Naive thymus-derived CD4-positive, alpha-beta T cell (primary cell): ENCODE measurements at regions of chr2 and their contacts with region 1.

Region 1: GRCh38 chr2:157433394-157433793 is 10.5 kb downstream of the CYTIP start:
- DNase-seq: peak in 2 of 9 donors; percentile 40 to 60
- ATAC-seq: peak; percentile 7
- H3K4me3 ChIP-seq: peak overlapping the region; percentile 60
- H3K4me3 Mint-ChIP-seq: peak overlapping the region; percentile 87 to 100 (median 97)
- H3K27ac ChIP-seq: peak overlapping the region; percentile 89
- H3K27ac Mint-ChIP-seq: peak overlapping the region; percentile 86 to 99 (median 96)
- H3K4me1 ChIP-seq: peaks cover 54 to 62% of the 10 kb centered on the region in 2 donors
- H3K4me1 Mint-ChIP-seq: peaks cover 61 to 89% (median 73%) of the 10 kb centered on the region in 7 donors
- H3K27me3 ChIP-seq: no peaks in the 10 kb centered on the region
- H3K27me3 Mint-ChIP-seq: no peaks in the 10 kb centered on the region

Region 2: DNA sequence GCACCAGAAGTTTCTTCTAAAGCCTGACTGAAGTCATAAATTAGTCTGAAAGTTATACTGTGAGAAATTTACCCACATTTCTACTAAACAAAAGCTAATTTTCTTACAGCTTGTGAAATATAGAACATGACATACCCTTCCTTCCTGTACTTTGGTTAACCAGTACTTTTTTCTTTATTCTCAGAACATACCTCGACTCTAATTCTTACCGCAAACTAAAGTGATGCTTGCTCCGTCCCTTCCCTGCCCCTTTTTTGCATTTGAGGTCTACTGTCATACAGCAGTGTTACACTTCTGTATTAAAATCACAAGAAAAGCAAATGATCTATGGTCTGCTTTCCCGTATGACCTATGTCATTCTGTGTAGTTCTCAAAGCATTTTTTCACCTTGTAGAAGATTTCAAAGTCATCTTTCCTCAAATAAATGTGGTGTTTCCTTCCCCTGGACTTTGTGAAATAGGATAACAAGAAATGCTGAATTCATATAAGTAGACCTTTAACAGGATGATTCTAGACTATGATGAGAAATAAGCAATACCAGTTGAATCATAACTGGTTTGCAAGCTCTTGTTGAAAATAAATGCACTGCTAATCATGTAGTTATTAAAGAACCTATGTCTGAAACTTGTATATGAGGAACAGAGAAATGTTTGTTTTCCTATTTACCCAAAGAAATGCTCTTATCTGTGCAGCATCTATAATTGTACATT is 19.9 kb before region 1 on chr2:
- CTCF ChIA-PET with region 1: interaction called, 34 read pairs
- POLR2A ChIA-PET with region 1: interaction called, 810 read pairs
- intact Hi-C with region 1: loop called (anchors 1 kb)
- DNase-seq: peak in 7 of 9 donors; percentile 71 to 94 (median 88)
- ATAC-seq: peak; percentile 86
- H3K4me3 ChIP-seq: peak overlapping the region; percentile 22
- H3K4me3 Mint-ChIP-seq: peak overlapping the region; percentile 45 to 85 (median 68)
- H3K27ac ChIP-seq: peak overlapping the region; percentile 86
- H3K27ac Mint-ChIP-seq: peak overlapping the region; percentile 92 to 98 (median 95)
- H3K4me1 ChIP-seq: peaks cover 84 to 89% of the 10 kb centered on the region in 2 donors
- H3K4me1 Mint-ChIP-seq: peaks cover 58 to 97% (median 93%) of the 10 kb centered on the region in 7 donors
- H3K27me3 ChIP-seq: no peaks in the 10 kb centered on the region
- H3K27me3 Mint-ChIP-seq: no peaks in the 10 kb centered on the region

Region 3: GRCh38 chr2:157420771-157421323 is 12.5 kb before region 1 on chr2:
- CTCF ChIA-PET with region 1: interaction called, 34 read pairs
- POLR2A ChIA-PET with region 1: interaction called, 810 read pairs
- intact Hi-C with region 1: loop called (anchors 1 kb)
- DNase-seq: no peak
- ATAC-seq: peak; percentile 74
- H3K4me3 ChIP-seq: no peak overlapping the region
- H3K4me3 Mint-ChIP-seq: peak overlapping the region in 9 of 10 donors; percentile 30 to 75 (median 66)
- H3K27ac ChIP-seq: peak overlapping the region; percentile 86
- H3K27ac Mint-ChIP-seq: peak overlapping the region; percentile 90 to 98 (median 94)
- H3K4me1 ChIP-seq: peaks cover 59% of the 10 kb centered on the region in 2 donors
- H3K4me1 Mint-ChIP-seq: peaks cover 49 to 91% (median 80%) of the 10 kb centered on the region in 7 donors
- H3K27me3 ChIP-seq: no peaks in the 10 kb centered on the region
- H3K27me3 Mint-ChIP-seq: no peaks in the 10 kb centered on the region

Region 4: GRCh38 chr2:157559061-157559460 is 125.7 kb after region 1 on chr2:
- CTCF ChIA-PET with region 1: no interaction called
- POLR2A ChIA-PET with region 1: no interaction called
- intact Hi-C with region 1: no loop called
- DNase-seq: no peak
- ATAC-seq: no peak
- H3K4me3 ChIP-seq: no peak overlapping the region
- H3K4me3 Mint-ChIP-seq: peak overlapping the region in 1 of 10 donors; percentile 1
- H3K27ac ChIP-seq: no peak overlapping the region
- H3K27ac Mint-ChIP-seq: peak overlapping the region in 2 of 9 donors; percentile 7 to 29
- H3K4me1 ChIP-seq: peaks cover 0 to 4% of the 10 kb centered on the region in 2 donors
- H3K4me1 Mint-ChIP-seq: peaks cover 12 to 43% (median 37%) of the 10 kb centered on the region in 7 donors
- H3K27me3 ChIP-seq: no peaks in the 10 kb centered on the region
- H3K27me3 Mint-ChIP-seq: no peaks in the 10 kb centered on the region